Thyroid gland (tissue), 4 donors: ENCODE measurements at regions of chr15 and their contacts with region 1.

Region 1: DNA sequence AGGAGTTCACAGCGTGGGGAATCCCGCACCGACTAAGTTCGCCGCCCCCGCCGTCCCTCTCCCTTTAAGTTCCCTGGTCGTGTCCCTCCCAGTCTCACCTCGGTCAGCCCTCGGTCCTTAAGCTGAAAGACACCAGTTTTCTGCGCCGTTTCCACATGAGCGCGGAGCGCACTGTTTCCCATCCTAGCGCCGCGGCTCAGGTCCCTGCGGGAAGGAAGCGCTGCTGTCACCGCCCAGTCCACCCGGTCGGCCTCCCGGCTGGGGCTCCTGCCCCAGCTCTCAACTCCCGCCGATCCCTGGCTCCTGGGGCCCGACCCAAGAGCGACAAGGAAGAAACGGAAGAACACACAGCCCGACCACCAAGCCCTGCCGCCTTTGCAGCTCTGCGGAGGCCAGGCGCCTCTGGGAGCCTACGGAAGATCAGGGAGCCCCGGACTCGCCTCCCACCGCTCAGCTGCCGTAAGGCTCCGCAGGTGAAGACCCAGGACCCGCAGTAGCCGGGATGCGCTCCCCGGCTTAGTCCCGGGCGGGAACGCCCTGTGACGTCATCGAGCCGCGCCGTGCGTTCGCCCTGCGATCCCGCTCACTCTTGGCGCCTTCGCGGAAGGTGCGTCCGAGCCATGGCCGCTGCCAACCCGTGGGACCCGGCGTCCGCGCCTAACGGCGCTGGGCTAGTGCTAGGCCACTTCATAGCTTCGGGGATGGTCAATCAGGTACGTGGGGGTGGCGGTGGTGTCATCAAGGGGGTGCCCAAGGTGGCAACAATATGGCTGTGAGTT is at the starts of genes HAUS2 and LRRC57:
- DNase-seq: peak; percentile 83 to 84
- H3K4me3 ChIP-seq: peak within 1 kb of the TSS; percentile 89 to 93 (median 92)
- H3K27ac ChIP-seq: peak within 1 kb of the TSS; percentile 84 to 87 (median 87)
- H3K4me1 ChIP-seq: peaks cover 5 to 20% of the 10 kb centered on the region in 2 donors
- H3K27me3 ChIP-seq: no peaks in the 10 kb centered on the region
- CTCF ChIP-seq: no peak
- POLR2A ChIP-seq: peak; percentile 47 to 86
- total RNA-seq, gene HAUS2: 20.6 to 32.3 (median 25.2) TPM
- total RNA-seq, gene LRRC57: 17.1 to 21.2 (median 18.6) TPM

Region 2: DNA sequence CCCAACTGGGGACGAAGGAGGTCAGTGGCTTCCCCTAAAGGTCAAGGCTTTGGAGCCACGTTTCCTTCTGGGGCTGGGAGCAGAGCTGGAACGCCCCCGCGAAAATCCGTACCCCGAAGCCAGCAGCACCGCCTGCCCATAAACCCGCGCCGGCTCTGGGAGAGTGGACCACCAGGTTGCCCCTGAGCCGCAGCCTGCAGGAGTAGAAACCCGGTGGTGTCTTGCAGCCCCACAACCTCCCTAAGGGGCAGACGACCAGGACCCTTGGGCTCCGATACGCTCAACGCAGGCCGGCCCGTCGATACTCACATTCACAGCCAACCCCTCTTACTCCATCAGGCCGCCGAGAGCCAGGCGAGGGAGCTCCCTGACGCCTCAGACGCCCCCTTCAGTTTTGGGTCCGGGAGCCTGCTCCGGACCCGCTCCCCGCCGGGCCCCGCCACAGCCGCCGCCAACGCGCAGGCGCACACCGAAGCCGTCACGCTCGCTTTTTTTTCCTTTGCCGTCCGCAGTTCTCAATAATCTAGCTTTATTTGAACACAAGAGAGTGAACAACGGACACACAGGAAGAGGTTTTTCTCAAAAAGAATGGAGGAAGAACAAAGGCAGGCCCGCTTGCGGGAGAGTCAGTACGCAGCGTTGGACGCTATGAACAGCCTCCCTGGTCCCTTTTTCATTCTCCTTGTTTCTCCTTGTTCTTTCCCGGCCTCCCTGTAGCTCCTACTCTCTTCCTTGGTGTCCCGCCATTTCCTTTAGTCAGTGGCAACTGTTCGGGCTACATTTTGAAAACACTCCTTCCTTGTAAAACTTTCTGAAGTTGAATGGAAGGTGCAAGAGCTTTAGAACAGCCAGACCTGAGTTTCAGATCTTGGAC is 57.5 kb before region 1 on chr15 and contains the start of gene ZNF106:
- intact Hi-C with region 1: loop called (anchors 5 kb)
- DNase-seq: peak; percentile 82 to 86
- H3K4me3 ChIP-seq: peak within 1 kb of the TSS; percentile 53 to 77 (median 60)
- H3K27ac ChIP-seq: peak within 1 kb of the TSS; percentile 90 to 96 (median 94)
- H3K4me1 ChIP-seq: peaks cover 17 to 26% of the 10 kb centered on the region in 2 donors
- H3K27me3 ChIP-seq: no peaks in the 10 kb centered on the region
- CTCF ChIP-seq: peak in 1 of 6 experiments; percentile 9
- POLR2A ChIP-seq: peak; percentile 47 to 90
- total RNA-seq, gene ZNF106: 42.9 to 54.8 (median 50.3) TPM

Region 3: GRCh38 chr15:42863572-42864239 is 315.3 kb after region 1 on chr15:
- intact Hi-C with region 1: no loop called
- DNase-seq: peak; percentile 7 to 44
- H3K4me3 ChIP-seq: no peak overlapping the region
- H3K27ac ChIP-seq: peak overlapping the region in 1 of 3 donors; percentile 42
- H3K4me1 ChIP-seq: peaks cover 10 to 12% of the 10 kb centered on the region in 2 donors
- H3K27me3 ChIP-seq: no peaks in the 10 kb centered on the region
- CTCF ChIP-seq: no peak
- POLR2A ChIP-seq: no peak